Activated T-helper 2 cell treated with anti-CD3 and anti-CD28 coated beads, Interferon-gamma antibody, Interleukin-2, Interleukin-4, amounts not matched to agents 10 μg/mL and 5 μg/mL and 100 μg/mL, durations not matched to agents 14 hours and 24 hours and 36 hours (primary cell): ENCODE measurements at regions of chr12 and their contacts with region 1.

Region 1: DNA sequence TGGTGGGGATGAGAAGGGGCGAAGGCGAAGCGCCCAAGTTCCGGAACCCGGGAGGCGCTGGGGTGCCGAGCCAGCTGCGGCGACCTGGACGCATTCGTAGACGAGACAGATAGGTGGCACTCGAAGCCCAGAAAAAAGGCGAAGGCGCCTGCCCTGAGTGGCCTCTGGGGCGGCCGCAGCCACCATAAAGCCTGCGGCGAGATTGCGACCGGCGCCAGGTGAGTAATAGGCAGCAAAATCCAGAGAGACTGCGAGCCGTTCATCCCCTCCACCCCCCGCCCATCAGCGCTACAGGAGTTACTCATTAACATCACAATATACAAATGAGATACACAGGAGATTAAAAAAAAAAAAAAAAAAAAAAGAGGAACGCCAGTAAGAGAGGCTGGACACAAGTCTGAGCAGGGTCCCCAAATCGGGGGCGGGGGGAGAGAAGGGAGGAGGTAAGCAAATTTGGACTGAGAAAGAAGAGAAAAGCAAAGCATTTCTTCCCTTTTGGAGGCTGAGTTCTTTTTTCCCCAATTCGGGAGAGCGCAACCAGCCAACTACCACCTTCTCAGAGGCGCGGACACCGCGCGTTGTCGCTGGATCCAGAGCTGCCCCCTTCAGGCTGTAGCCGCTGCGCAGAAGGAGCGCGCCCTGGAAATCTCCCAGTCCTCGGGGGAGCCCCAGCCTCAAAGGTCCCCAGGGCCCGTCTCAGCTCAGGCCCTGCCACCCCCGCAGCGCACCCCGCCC is 15.7 kb downstream of the TBX3 start:
- DNase-seq: no peak
- H3K4me3 Mint-ChIP-seq: no peak overlapping the region
- H3K27ac Mint-ChIP-seq: no peak overlapping the region
- H3K4me1 Mint-ChIP-seq: no peaks in the 10 kb centered on the region
- H3K27me3 Mint-ChIP-seq: peaks cover 84% of the 10 kb centered on the region

Region 2: DNA sequence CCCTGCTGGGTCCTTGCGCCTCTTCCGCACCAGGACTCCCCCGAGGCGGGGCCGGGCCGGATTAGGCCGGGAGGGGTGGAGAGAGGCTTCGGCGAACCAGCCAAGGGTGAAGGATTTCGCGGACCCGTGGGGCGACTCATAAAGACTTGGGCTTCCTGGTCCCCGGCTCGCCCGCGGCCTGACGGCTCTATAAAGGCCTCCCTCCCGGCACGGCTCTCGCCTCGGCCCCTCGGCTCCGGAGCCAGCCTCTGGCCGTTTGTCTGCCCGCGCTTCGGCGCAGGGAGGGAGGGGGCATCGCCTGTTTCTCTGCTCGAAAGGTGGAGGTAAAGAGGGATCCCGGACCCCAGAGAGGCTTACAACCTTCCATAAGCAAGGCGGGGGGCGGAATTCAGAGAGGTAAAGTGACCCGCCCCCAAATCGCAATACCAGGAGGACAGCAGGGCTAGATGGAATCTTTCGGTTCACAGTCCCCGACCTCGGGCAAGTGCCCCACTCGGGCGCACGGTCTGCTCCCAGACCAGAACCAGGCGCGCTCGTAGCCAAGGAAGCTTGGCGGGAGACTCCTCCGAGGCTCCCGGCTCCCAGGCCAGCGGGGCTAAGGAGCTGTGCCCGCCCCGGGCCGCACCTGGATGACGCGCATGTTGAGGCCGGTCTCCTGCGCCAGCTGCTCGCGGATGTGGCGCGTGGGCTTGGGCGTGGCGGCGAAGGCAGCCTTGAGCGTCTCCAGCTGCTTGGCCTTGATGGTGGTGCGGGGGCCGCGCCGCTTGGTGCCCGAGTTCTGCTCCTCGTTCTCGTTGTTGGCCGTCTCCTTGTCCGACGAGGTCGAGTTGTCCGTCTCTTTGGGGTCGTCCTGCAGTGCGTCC is 1200.6 kb before region 1 on chr12:
- intact Hi-C with region 1: loop called (anchors 2 kb)
- DNase-seq: no peak
- H3K4me3 Mint-ChIP-seq: no peak overlapping the region
- H3K27ac Mint-ChIP-seq: no peak overlapping the region
- H3K4me1 Mint-ChIP-seq: peaks cover 6% of the 10 kb centered on the region
- H3K27me3 Mint-ChIP-seq: peaks cover 69% of the 10 kb centered on the region

Region 3: DNA sequence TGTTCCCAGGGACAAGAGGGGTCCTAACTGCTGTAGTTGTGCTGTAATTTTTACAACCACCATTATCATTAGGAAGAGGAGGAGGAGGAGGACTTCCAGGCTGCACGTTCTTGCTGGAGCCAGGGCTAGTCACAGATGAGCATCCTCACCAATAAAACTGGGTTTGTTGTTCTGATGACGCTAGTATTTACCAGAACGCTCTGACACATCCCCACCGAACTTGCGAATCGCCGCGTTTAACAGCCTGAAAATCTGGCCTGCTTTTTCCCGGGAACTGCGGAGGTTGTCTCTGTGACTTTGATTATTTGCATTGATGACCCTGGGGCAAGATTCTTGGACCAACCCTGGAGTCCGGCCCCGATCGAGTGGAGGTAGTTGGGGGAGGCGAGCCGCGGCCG is 272.6 kb before region 1 on chr12:
- intact Hi-C with region 1: loop called (anchors 2 kb)
- DNase-seq: no peak
- H3K4me3 Mint-ChIP-seq: no peak overlapping the region
- H3K27ac Mint-ChIP-seq: no peak overlapping the region
- H3K4me1 Mint-ChIP-seq: no peaks in the 10 kb centered on the region
- H3K27me3 Mint-ChIP-seq: peaks cover 75% of the 10 kb centered on the region

Region 4: GRCh38 chr12:114444422-114445279 is 223.7 kb before region 1 on chr12:
- intact Hi-C with region 1: loop called (anchors 5 kb)
- DNase-seq: no peak
- H3K4me3 Mint-ChIP-seq: no peak overlapping the region
- H3K27ac Mint-ChIP-seq: no peak overlapping the region
- H3K4me1 Mint-ChIP-seq: no peaks in the 10 kb centered on the region
- H3K27me3 Mint-ChIP-seq: peaks cover 87% of the 10 kb centered on the region

Region 5: GRCh38 chr12:114476159-114476558 is 192.2 kb before region 1 on chr12:
- intact Hi-C with region 1: no loop called
- DNase-seq: no peak
- H3K4me3 Mint-ChIP-seq: no peak overlapping the region
- H3K27ac Mint-ChIP-seq: no peak overlapping the region
- H3K4me1 Mint-ChIP-seq: no peaks in the 10 kb centered on the region
- H3K27me3 Mint-ChIP-seq: peaks cover 35% of the 10 kb centered on the region

Region 6: GRCh38 chr12:114684098-114684869 is 16.0 kb after region 1 on chr12 and contains the start of gene TBX3:
- intact Hi-C with region 1: loop called (anchors 2 kb)
- DNase-seq: peak; percentile 21
- H3K4me3 Mint-ChIP-seq: peak within 1 kb of the TSS; percentile 48
- H3K27ac Mint-ChIP-seq: no peak within 1 kb of the TSS
- H3K4me1 Mint-ChIP-seq: peaks cover 9% of the 10 kb centered on the region
- H3K27me3 Mint-ChIP-seq: peaks cover 90% of the 10 kb centered on the region
- total RNA-seq, gene TBX3: not detected in 2 replicates

Region 7: DNA sequence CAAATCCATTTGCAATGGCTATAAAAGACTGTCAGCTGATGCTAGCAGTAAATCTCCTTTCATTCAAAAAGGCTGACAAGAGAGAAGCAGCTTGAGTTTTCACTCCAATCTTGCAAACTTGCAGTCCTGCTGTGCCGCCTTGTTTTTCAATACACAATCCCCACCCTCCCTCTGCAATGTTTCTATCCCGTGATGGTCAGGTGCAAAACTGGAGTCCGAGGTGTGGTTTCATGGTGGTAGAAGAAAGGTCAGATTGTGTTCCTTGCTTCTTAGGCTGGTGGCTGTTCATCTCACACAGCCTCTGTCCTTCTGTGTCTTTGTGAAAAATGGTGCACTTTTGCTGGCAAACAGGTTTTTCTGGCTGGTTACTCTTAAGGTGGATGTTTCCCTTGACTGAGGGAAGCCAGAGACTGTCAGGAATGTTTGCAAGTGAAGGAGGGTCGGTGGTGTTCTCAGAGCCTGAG is 43.4 kb after region 1 on chr12:
- intact Hi-C with region 1: no loop called
- DNase-seq: no peak
- H3K4me3 Mint-ChIP-seq: no peak overlapping the region
- H3K27ac Mint-ChIP-seq: no peak overlapping the region
- H3K4me1 Mint-ChIP-seq: no peaks in the 10 kb centered on the region
- H3K27me3 Mint-ChIP-seq: no peaks in the 10 kb centered on the region

Region 8: GRCh38 chr12:114812858-114813761 is 144.8 kb after region 1 on chr12:
- intact Hi-C with region 1: no loop called
- DNase-seq: no peak
- H3K4me3 Mint-ChIP-seq: no peak overlapping the region
- H3K27ac Mint-ChIP-seq: no peak overlapping the region
- H3K4me1 Mint-ChIP-seq: no peaks in the 10 kb centered on the region
- H3K27me3 Mint-ChIP-seq: peaks cover 2% of the 10 kb centered on the region